SK-N-SH (cell line): ENCODE measurements at regions of chr14 and their contacts with region 1.

Region 1: DNA sequence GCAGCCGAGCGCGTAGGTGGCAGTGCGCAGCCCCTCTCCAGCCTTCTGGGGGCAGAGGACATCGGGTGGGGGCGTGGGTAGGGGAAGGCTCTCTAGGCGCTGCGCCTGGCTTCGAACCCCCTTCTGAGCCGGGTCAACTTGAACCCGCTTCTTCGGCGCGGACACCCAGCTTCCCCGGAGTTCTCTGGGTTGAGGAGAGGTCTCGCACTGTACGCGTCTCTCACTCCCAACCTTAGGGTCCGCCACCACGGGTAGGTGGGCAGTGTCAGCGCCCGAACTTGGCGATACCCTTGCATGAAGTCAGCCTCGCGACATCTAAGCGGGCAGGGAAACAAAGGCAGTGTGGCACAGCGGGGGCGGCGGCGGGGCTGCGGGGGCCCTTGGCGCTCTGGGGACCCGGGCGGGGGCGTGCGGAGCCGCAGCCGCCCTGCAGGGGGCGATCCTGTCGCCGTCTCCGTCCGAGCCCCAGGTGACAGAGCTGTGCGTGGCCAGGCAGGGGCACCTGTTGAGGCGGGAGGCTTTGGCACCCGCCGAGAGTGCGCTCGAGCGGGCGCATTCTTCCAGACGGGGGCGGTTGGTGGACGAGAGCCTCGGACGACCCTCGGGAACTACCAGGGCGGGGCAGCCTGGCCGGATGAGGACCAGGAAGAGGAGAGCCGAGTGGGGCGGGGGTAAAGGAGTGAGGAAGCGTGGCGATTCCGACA is 1.1 kb downstream of the GALNT16 start:
- DNase-seq: peak; percentile 91
- H3K4me3 ChIP-seq: peak overlapping the region; percentile 68 to 71
- H3K27ac ChIP-seq: no peak overlapping the region
- H3K4me1 ChIP-seq: peaks cover 13 to 31% of the 10 kb centered on the region in 2 experiments; a peak in 2 of 4 replicates
- H3K27me3 ChIP-seq: no peaks in the 10 kb centered on the region
- CTCF ChIP-seq: peak; percentile 62
- EP300 ChIP-seq: no peak
- RAD21 ChIP-seq: peak; percentile 44

Region 2: GRCh38 chr14:68961781-68962584 is 299.0 kb before region 1 on chr14:
- CTCF ChIA-PET with region 1: no interaction called
- POLR2A ChIA-PET with region 1: no interaction called
- DNase-seq: peak; percentile 60
- H3K4me3 ChIP-seq: no peak overlapping the region
- H3K27ac ChIP-seq: peak overlapping the region; percentile 17 to 73; a peak in 3 of 4 replicates
- H3K4me1 ChIP-seq: peaks cover 60 to 71% of the 10 kb centered on the region in 2 experiments
- H3K27me3 ChIP-seq: no peaks in the 10 kb centered on the region
- CTCF ChIP-seq: no peak
- EP300 ChIP-seq: no peak
- RAD21 ChIP-seq: no peak

Region 3: DNA sequence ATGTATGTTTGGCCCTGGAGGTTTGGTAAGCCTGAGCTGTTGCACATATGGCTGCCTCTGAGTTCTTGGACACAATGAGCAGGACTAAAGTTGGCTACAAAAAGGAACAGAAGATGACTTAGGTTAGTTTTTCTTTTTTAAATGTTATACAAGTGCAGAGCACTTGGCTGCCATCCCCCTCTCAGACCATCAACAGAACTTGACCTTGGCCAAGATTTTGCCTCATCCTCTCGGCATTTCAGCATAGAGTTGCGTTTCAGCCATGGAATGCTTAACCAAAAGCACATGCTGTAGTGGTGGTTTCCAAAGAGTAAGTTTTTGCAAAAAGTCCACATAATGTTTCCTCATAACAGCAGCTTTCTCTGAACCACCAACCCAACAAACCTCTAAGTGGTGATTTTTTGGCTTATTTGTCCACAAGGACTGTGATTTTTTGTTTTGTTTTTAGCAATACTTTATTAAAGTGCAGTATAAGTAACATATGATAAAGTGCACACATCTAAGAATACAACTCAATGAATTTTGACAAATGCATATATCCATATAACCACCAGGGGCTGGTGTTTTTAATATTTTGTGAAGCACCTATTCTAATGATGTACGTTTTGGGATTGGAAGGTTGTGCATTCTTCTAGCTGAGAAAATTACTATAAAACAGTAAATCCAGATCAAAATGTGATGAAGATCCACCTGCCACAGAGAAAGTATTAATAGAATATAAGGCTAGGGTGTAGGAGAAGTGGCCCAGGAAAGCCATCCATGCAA is 13.2 kb before region 1 on chr14:
- CTCF ChIA-PET with region 1: interaction called, 44 read pairs
- POLR2A ChIA-PET with region 1: no interaction called
- DNase-seq: no peak
- H3K4me3 ChIP-seq: no peak overlapping the region
- H3K27ac ChIP-seq: peak overlapping the region; percentile 67 to 73; a peak in 3 of 4 replicates
- H3K4me1 ChIP-seq: peaks cover 2 to 5% of the 10 kb centered on the region in 2 experiments; a peak in 3 of 4 replicates
- H3K27me3 ChIP-seq: no peaks in the 10 kb centered on the region
- CTCF ChIP-seq: peak; percentile 66
- EP300 ChIP-seq: peak in 1 of 2 experiments; percentile 60; a peak in 1 of 4 replicates
- RAD21 ChIP-seq: no peak

Region 4: GRCh38 chr14:69288011-69288771 is 27.2 kb after region 1 on chr14:
- CTCF ChIA-PET with region 1: interaction called, 18 read pairs
- POLR2A ChIA-PET with region 1: no interaction called
- DNase-seq: peak; percentile 50
- H3K4me3 ChIP-seq: no peak overlapping the region
- H3K27ac ChIP-seq: peak overlapping the region in 1 of 2 experiments; percentile 54; a peak in 2 of 4 replicates
- H3K4me1 ChIP-seq: peaks cover 0 to 27% of the 10 kb centered on the region in 2 experiments; a peak in 2 of 4 replicates
- H3K27me3 ChIP-seq: no peaks in the 10 kb centered on the region
- CTCF ChIP-seq: peak; percentile 56
- EP300 ChIP-seq: peak in 1 of 2 experiments; percentile 32; a peak in 1 of 4 replicates
- RAD21 ChIP-seq: peak; percentile 46

Region 5: GRCh38 chr14:69346710-69347109 is 85.7 kb after region 1 on chr14:
- CTCF ChIA-PET with region 1: interaction called, 15 read pairs
- POLR2A ChIA-PET with region 1: no interaction called
- DNase-seq: peak; percentile 56
- H3K4me3 ChIP-seq: no peak overlapping the region
- H3K27ac ChIP-seq: no peak overlapping the region
- H3K4me1 ChIP-seq: peaks cover 0 to 2% of the 10 kb centered on the region in 2 experiments; a peak in 1 of 4 replicates
- H3K27me3 ChIP-seq: no peaks in the 10 kb centered on the region
- CTCF ChIP-seq: peak; percentile 53
- EP300 ChIP-seq: no peak
- RAD21 ChIP-seq: peak; percentile 39; the same call in 1 of the 2 replicates

Region 6: DNA sequence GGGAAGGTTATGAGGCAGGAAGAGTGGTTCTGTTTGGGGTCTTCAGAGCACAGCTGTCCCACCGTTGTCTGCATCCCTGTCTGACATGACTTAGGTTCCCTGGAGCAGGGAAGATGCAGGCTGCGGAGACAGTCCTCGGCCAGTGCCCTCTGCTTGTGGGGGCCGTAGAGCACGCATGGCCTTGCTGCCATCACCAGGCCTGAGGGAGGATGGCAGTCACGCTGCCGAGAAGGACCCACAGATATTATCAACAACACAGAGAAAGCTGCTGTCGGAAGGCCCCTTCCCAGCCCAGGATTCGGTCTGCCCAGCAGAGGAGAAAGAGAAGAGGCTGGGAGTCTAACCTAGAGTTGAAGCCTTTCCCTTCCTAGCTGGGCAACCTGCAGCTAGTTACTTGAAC is 102.0 kb after region 1 on chr14:
- CTCF ChIA-PET with region 1: interaction called, 32 read pairs
- POLR2A ChIA-PET with region 1: no interaction called
- DNase-seq: peak; percentile 78
- H3K4me3 ChIP-seq: no peak overlapping the region
- H3K27ac ChIP-seq: no peak overlapping the region
- H3K4me1 ChIP-seq: peaks cover 0 to 7% of the 10 kb centered on the region in 2 experiments; a peak in 1 of 4 replicates
- H3K27me3 ChIP-seq: no peaks in the 10 kb centered on the region
- CTCF ChIP-seq: peak; percentile 54
- EP300 ChIP-seq: no peak
- RAD21 ChIP-seq: peak; percentile 84

Region 7: DNA sequence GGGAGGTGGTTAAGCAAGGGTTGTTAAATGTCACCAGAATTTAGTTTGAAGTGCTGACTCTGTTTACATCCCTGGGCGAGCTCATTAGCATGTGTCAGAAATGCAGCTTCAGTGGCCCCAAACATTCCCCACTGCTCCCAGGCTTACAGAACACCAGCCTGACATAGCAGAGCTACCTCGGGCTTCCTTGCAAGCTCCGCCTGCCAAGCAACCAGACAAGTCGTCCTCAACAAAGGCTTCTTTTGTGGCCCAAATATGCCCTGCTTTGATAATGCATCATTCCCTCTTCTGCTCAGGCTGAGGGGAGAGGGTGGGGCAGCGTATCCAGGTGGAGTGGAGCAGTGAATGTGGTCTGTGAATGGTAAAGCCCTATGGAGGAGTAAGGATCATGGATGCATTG is 109.0 kb after region 1 on chr14:
- CTCF ChIA-PET with region 1: interaction called, 22 read pairs
- POLR2A ChIA-PET with region 1: no interaction called
- DNase-seq: no peak
- H3K4me3 ChIP-seq: no peak overlapping the region
- H3K27ac ChIP-seq: no peak overlapping the region
- H3K4me1 ChIP-seq: no peaks in the 10 kb centered on the region
- H3K27me3 ChIP-seq: no peaks in the 10 kb centered on the region
- CTCF ChIP-seq: no peak
- EP300 ChIP-seq: no peak
- RAD21 ChIP-seq: no peak

Region 8: GRCh38 chr14:69460093-69460701 is 199.2 kb after region 1 on chr14:
- CTCF ChIA-PET with region 1: interaction called, 20 read pairs
- POLR2A ChIA-PET with region 1: no interaction called
- DNase-seq: peak; percentile 70
- H3K4me3 ChIP-seq: no peak overlapping the region; a peak in 1 of 4 replicates
- H3K27ac ChIP-seq: peak overlapping the region in 1 of 2 experiments; percentile 47; a peak in 1 of 4 replicates
- H3K4me1 ChIP-seq: peaks cover 0 to 6% of the 10 kb centered on the region in 2 experiments; a peak in 1 of 4 replicates
- H3K27me3 ChIP-seq: no peaks in the 10 kb centered on the region
- CTCF ChIP-seq: peak; percentile 87
- EP300 ChIP-seq: no peak
- RAD21 ChIP-seq: peak; percentile 84